ENCODE measurements at regions of chr3 and their contacts with region 1.

Region 1: GRCh38 chr3:196263819-196264218 is 23.7 kb downstream of the PCYT1A start:
- DNase-seq: no peak
- H3K4me3 Mint-ChIP-seq: no peak overlapping the region
- H3K27ac Mint-ChIP-seq: no peak overlapping the region
- H3K4me1 Mint-ChIP-seq: peaks cover 4% of the 10 kb centered on the region
- H3K27me3 Mint-ChIP-seq: no peaks in the 10 kb centered on the region

Region 2: GRCh38 chr3:195508185-195508584 is 755.6 kb before region 1 on chr3:
- CTCF ChIA-PET with region 1: no interaction called
- DNase-seq: no peak
- H3K4me3 Mint-ChIP-seq: no peak overlapping the region
- H3K27ac Mint-ChIP-seq: no peak overlapping the region
- H3K4me1 Mint-ChIP-seq: peaks cover 9% of the 10 kb centered on the region
- H3K27me3 Mint-ChIP-seq: no peaks in the 10 kb centered on the region

Region 3: GRCh38 chr3:196251918-196252317 is 11.9 kb before region 1 on chr3:
- CTCF ChIA-PET with region 1: interaction called, 11 read pairs
- DNase-seq: no peak
- H3K4me3 Mint-ChIP-seq: no peak overlapping the region
- H3K27ac Mint-ChIP-seq: peak overlapping the region; percentile 24
- H3K4me1 Mint-ChIP-seq: peaks cover 5% of the 10 kb centered on the region
- H3K27me3 Mint-ChIP-seq: no peaks in the 10 kb centered on the region

Region 4: GRCh38 chr3:196287440-196288148 is 23.8 kb after region 1 on chr3 and contains the start of gene PCYT1A:
- CTCF ChIA-PET with region 1: no interaction called
- DNase-seq: peak; percentile 87
- H3K4me3 Mint-ChIP-seq: peak within 1 kb of the TSS; percentile 98
- H3K27ac Mint-ChIP-seq: peak within 1 kb of the TSS; percentile 94
- H3K4me1 Mint-ChIP-seq: peaks cover 48% of the 10 kb centered on the region
- H3K27me3 Mint-ChIP-seq: no peaks in the 10 kb centered on the region